Activated B cell treated with CpG ODN at 0.5 μM for 24 hours (primary cell): ENCODE measurements at regions of chr3 and their contacts with region 1.

Region 1: GRCh38 chr3:119352849-119353502 is 58.8 kb downstream of the ARHGAP31 start:
- DNase-seq: no peak
- ATAC-seq: peak; percentile 46
- H3K4me3 Mint-ChIP-seq: peak overlapping the region; percentile 41
- H3K27ac Mint-ChIP-seq: peak overlapping the region; percentile 47
- H3K4me1 Mint-ChIP-seq: peaks cover 47% of the 10 kb centered on the region
- H3K27me3 Mint-ChIP-seq: no peaks in the 10 kb centered on the region
- CTCF ChIP-seq: no peak

Region 2: GRCh38 chr3:118932822-118933558 is 420.0 kb before region 1 on chr3:
- CTCF ChIA-PET with region 1: no interaction called
- POLR2A ChIA-PET with region 1: no interaction called
- intact Hi-C with region 1: no loop called
- DNase-seq: no peak
- ATAC-seq: no peak
- H3K4me3 Mint-ChIP-seq: no peak overlapping the region
- H3K27ac Mint-ChIP-seq: no peak overlapping the region
- H3K4me1 Mint-ChIP-seq: no peaks in the 10 kb centered on the region
- H3K27me3 Mint-ChIP-seq: no peaks in the 10 kb centered on the region
- CTCF ChIP-seq: no peak

Region 3: DNA sequence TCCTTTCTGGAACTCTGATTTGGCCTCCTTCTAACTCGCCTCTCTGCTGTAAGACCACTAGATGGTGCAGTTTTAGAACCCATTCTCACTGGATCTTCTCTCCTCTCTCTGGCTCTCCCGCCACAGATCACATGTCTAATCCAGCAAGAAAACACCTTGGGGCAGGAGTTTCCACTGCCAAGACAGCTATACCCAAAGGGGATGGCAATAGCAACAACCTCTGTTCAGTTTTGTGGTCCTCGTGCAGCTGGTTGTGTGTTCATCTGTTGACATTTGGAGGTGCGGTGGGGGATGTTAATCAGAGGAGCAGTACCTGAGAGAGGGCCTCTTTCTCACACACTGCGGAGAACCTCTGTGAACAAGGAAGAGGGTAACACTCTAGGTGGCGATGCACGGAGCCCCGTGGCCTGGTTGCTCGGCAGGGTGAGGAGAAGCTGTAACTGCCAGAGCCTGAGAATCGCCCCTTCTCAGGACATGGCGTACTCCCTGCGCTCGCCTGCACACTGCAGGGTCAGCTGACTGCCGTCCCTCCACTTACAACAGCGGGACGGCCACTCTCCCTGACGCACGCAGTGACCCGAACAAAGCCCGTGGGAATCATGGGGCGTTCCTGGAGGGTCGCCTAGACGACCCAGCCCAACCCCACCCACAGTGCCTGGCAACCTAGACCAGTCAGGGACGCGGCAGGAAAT is 207.3 kb before region 1 on chr3 and contains the start of gene TEX55:
- CTCF ChIA-PET with region 1: interaction called, 7 read pairs
- POLR2A ChIA-PET with region 1: no interaction called
- intact Hi-C with region 1: loop called (anchors 1 kb)
- DNase-seq: no peak
- ATAC-seq: no peak
- H3K4me3 Mint-ChIP-seq: no peak within 1 kb of the TSS
- H3K27ac Mint-ChIP-seq: no peak within 1 kb of the TSS
- H3K4me1 Mint-ChIP-seq: no peaks in the 10 kb centered on the region
- H3K27me3 Mint-ChIP-seq: no peaks in the 10 kb centered on the region
- CTCF ChIP-seq: no peak
- total RNA-seq, gene TEX55: not detected in 2 replicates

Region 4: GRCh38 chr3:119293871-119294695 is 58.9 kb before region 1 on chr3 and contains the start of gene ARHGAP31:
- CTCF ChIA-PET with region 1: interaction called, 8 read pairs
- POLR2A ChIA-PET with region 1: interaction called, 32 read pairs
- intact Hi-C with region 1: loop called (anchors 1 kb)
- DNase-seq: peak; percentile 56
- ATAC-seq: peak; percentile 73
- H3K4me3 Mint-ChIP-seq: peak within 1 kb of the TSS; percentile 88
- H3K27ac Mint-ChIP-seq: peak within 1 kb of the TSS; percentile 90
- H3K4me1 Mint-ChIP-seq: peaks cover 61% of the 10 kb centered on the region
- H3K27me3 Mint-ChIP-seq: no peaks in the 10 kb centered on the region
- CTCF ChIP-seq: no peak
- total RNA-seq, gene ARHGAP31: 23.7 and 26.0 TPM in 2 replicates

Region 5: DNA sequence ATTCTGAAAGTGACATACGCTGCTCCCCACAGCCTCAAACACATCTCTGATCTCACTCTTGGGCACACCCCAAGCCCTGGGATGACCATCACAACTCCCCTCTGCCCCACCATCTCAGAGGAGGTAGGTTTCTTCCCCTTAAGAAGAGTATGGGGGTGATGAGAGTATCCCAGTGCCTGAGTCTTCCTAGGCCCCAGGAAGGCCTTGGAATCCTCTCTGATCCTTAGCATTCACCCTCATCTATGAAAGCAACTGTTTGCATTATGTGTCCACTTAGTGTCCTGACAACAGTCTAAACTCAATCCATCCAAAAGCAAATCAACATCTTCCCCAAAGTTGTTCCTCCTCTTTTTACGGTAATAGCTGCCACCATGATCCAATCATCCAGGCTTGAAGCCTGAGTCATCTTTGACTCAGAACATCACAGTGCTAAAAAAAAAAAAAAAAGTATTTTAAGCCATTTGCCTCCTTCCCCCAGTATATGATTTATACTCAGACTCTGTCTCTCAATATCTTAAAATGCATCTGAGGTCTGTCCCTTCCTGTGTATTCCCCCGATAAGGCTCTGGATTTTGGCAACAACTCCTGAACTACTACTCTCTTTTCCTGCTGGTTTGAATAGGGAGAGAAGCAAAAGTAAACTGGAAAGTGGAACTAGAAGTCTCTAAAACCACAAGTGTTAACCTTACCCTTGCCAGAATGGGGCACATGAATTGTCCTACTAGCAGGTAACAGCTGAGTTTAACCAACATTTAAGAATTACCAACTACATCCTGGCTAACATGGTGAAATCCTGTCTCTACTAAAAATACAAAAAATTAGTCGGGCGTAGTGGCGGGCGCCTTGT is 284.9 kb after region 1 on chr3:
- CTCF ChIA-PET with region 1: no interaction called
- POLR2A ChIA-PET with region 1: no interaction called
- intact Hi-C with region 1: no loop called
- DNase-seq: no peak
- ATAC-seq: peak; percentile 54
- H3K4me3 Mint-ChIP-seq: peak overlapping the region; percentile 78
- H3K27ac Mint-ChIP-seq: peak overlapping the region; percentile 98
- H3K4me1 Mint-ChIP-seq: peaks cover 44% of the 10 kb centered on the region
- H3K27me3 Mint-ChIP-seq: no peaks in the 10 kb centered on the region
- CTCF ChIP-seq: no peak